ENCODE measurements at regions of chr12 and their contacts with region 1.

Region 1: DNA sequence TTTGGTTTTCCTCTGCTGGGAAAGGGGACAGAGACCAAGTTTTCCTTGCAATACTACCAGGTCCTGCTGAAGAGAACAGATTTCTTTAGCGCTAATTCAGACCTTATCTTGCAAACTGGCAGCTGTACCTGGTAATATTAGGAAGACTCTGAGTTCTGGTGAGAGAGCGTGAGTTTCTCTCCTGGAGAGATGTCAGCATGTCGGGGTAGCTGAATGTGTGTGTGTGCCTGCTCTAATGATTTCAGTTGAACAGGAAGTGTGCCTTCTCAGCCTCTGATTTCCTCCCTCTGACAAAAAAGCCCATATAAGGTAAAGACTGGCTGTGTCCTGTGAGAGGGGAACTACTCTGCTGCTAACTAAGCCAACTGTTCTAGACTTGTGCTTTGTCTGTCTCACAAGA is 10.3 kb upstream of the ERP27 start:
- DNase-seq: peak in 8 of 9 donors; percentile 34 to 87 (median 81)
- ATAC-seq: peak; percentile 88
- H3K4me3 ChIP-seq: peak overlapping the region; percentile 47
- H3K4me3 Mint-ChIP-seq: peak overlapping the region; percentile 72 to 97 (median 90)
- H3K27ac ChIP-seq: peak overlapping the region; percentile 96
- H3K27ac Mint-ChIP-seq: peak overlapping the region; percentile 87 to 99 (median 97)
- H3K4me1 ChIP-seq: peaks cover 77 to 79% of the 10 kb centered on the region in 2 donors
- H3K4me1 Mint-ChIP-seq: peaks cover 69 to 95% (median 91%) of the 10 kb centered on the region in 7 donors
- H3K27me3 ChIP-seq: no peaks in the 10 kb centered on the region
- H3K27me3 Mint-ChIP-seq: no peaks in the 10 kb centered on the region

Region 2: GRCh38 chr12:14723763-14724162 is 224.9 kb before region 1 on chr12:
- CTCF ChIA-PET with region 1: no interaction called
- POLR2A ChIA-PET with region 1: no interaction called
- intact Hi-C with region 1: loop called in 1 of 2 experiments (anchors 5 kb)
- DNase-seq: peak; percentile 19 to 67 (median 59)
- ATAC-seq: peak; percentile 83
- H3K4me3 ChIP-seq: no peak overlapping the region
- H3K4me3 Mint-ChIP-seq: no peak overlapping the region
- H3K27ac ChIP-seq: no peak overlapping the region
- H3K27ac Mint-ChIP-seq: no peak overlapping the region
- H3K4me1 ChIP-seq: no peaks in the 10 kb centered on the region
- H3K4me1 Mint-ChIP-seq: peaks cover 0 to 4% (median 0%) of the 10 kb centered on the region in 7 donors
- H3K27me3 ChIP-seq: no peaks in the 10 kb centered on the region
- H3K27me3 Mint-ChIP-seq: peaks cover 0 to 34% (median 10%) of the 10 kb centered on the region in 5 donors

Region 3: DNA sequence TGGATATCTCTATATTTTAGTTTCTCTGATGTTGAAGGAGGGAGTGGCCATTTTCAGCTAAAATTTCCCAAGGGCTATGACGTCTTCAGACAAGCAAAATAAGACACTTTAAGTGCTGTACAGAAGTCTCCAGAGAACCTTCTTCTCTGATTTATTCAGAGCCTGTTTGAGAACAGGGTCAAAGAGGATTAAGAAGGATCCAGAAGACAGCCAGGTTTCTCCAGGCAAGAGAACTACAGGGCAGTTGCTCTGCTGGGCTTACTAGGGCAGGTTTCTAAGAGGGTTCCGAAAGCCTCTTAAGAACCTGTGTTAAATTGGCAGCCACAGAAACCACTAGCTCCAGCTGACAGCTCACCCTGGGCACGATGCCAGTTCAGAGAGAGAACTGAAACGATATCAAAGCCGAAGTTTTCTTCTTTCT is 64.2 kb before region 1 on chr12:
- CTCF ChIA-PET with region 1: interaction called, 3 read pairs
- POLR2A ChIA-PET with region 1: interaction called, 4 read pairs
- intact Hi-C with region 1: loop called in 1 of 2 experiments (anchors 2 kb)
- DNase-seq: peak in 8 of 9 donors; percentile 59 to 93 (median 88)
- ATAC-seq: peak; percentile 95
- H3K4me3 ChIP-seq: no peak overlapping the region
- H3K4me3 Mint-ChIP-seq: peak overlapping the region in 9 of 10 donors; percentile 62 to 83 (median 77)
- H3K27ac ChIP-seq: peak overlapping the region; percentile 60
- H3K27ac Mint-ChIP-seq: peak overlapping the region in 8 of 9 donors; percentile 49 to 95 (median 92)
- H3K4me1 ChIP-seq: peaks cover 0 to 27% of the 10 kb centered on the region in 2 donors
- H3K4me1 Mint-ChIP-seq: peaks cover 15 to 75% (median 60%) of the 10 kb centered on the region in 7 donors
- H3K27me3 ChIP-seq: no peaks in the 10 kb centered on the region
- H3K27me3 Mint-ChIP-seq: peaks cover 0 to 29% (median 8%) of the 10 kb centered on the region in 5 donors

Region 4: DNA sequence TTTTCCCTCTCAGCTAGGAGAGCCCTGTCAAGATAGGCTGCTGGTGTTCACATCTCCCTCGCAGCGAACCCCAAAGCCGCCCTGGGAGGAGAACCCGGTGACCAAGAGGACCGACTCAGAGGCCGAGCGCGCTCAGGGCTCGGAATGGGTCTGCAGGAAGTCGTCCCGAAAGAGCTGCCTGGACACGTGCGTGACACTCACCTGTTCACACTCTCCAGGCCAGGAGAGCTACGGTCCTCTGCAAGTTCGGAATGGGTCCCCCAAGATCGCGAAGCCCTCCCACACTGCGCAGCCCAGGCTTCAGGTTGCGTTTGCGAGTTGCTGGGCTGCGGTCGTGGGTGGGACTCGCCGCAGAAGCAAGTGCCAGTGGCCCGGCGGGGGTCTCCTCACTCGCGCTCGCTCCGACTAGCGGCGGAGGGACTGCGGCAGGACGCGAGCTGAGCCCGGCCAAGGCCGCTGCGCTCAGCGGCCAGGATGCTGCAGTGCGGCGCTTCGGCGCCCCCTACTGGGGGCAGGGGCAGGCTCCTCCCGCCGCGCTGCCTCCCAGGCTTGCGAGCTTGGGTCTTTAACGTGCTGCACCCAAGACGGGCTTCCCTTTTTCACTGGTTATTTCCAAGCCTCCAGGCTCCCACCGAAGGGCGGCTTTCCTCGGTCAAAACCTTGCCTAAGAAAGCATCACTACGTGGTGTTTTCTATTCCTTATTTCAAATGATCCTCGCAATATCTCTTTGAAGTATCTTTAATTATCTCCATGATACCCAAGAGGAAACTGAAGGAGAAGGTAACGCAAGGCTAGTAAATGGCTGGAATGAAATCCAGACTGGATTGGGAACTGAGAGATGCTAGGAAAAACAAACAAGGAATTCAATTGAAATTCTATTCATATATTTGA is 272.6 kb after region 1 on chr12 and contains the start of gene RERG:
- CTCF ChIA-PET with region 1: no interaction called
- POLR2A ChIA-PET with region 1: no interaction called
- intact Hi-C with region 1: loop called in 1 of 2 experiments (anchors 5 kb)
- DNase-seq: peak; percentile 57 to 86 (median 77)
- ATAC-seq: peak; percentile 99
- H3K4me3 ChIP-seq: peak within 1 kb of the TSS; percentile 43
- H3K4me3 Mint-ChIP-seq: peak within 1 kb of the TSS; percentile 61 to 83 (median 78)
- H3K27ac ChIP-seq: no peak within 1 kb of the TSS
- H3K27ac Mint-ChIP-seq: no peak within 1 kb of the TSS
- H3K4me1 ChIP-seq: peaks cover 6% of the 10 kb centered on the region in 2 donors
- H3K4me1 Mint-ChIP-seq: peaks cover 0 to 17% (median 9%) of the 10 kb centered on the region in 7 donors
- H3K27me3 ChIP-seq: no peaks in the 10 kb centered on the region
- H3K27me3 Mint-ChIP-seq: peaks cover 25 to 43% (median 32%) of the 10 kb centered on the region in 5 donors
- total RNA-seq, gene RERG: 0.35 TPM in 1 of 5 experiments, not detected in the others

Measured in naive thymus-derived CD4-positive, alpha-beta T cell (primary cell).